Activated B cell treated with CpG ODN at 0.5 μM for 24 hours (primary cell): ENCODE measurements at regions of chr2 and their contacts with region 1.

Region 1: GRCh38 chr2:119759451-119760236 is at the start of gene PTPN4:
- DNase-seq: peak; percentile 87
- ATAC-seq: peak; percentile 93
- H3K4me3 Mint-ChIP-seq: peak within 1 kb of the TSS; percentile 95
- H3K27ac Mint-ChIP-seq: peak within 1 kb of the TSS; percentile 89
- H3K4me1 Mint-ChIP-seq: peaks cover 41% of the 10 kb centered on the region
- H3K27me3 Mint-ChIP-seq: no peaks in the 10 kb centered on the region
- CTCF ChIP-seq: no peak
- total RNA-seq, gene PTPN4: 28.8 and 41.2 TPM in 2 replicates

Region 2: GRCh38 chr2:118088051-118089024 is 1671.3 kb before region 1 on chr2 and contains the start of gene INSIG2:
- CTCF ChIA-PET with region 1: no interaction called
- POLR2A ChIA-PET with region 1: interaction called, 7 read pairs
- intact Hi-C with region 1: loop called (anchors 2 kb)
- DNase-seq: peak; percentile 88
- ATAC-seq: peak; percentile 84
- H3K4me3 Mint-ChIP-seq: peak within 1 kb of the TSS; percentile 94
- H3K27ac Mint-ChIP-seq: peak within 1 kb of the TSS; percentile 84
- H3K4me1 Mint-ChIP-seq: peaks cover 32% of the 10 kb centered on the region
- H3K27me3 Mint-ChIP-seq: no peaks in the 10 kb centered on the region
- CTCF ChIP-seq: no peak
- total RNA-seq, gene INSIG2: 16.8 and 16.9 TPM in 2 replicates

Region 3: DNA sequence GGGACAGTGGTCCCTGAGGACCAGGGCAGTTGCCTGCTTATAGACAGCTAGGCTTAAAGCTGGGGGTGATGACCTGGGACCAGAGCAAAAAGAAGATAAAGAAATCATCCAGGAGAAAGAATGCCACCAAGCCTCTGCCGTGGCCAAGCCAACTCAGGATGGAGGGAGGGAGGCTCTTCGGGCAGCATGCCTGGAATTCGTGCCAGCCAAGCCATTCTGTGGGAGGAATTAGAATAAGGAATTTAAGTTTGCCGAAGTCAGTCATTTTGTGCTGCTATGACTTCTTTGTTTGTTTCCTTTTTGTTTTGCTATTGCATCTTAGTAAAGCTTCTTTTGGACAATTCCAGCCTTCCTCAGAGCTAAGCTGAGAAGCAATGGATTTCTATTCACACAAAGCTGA is 1036.2 kb before region 1 on chr2:
- CTCF ChIA-PET with region 1: no interaction called
- POLR2A ChIA-PET with region 1: no interaction called
- intact Hi-C with region 1: no loop called
- DNase-seq: no peak
- ATAC-seq: no peak
- H3K4me3 Mint-ChIP-seq: no peak overlapping the region
- H3K27ac Mint-ChIP-seq: no peak overlapping the region
- H3K4me1 Mint-ChIP-seq: no peaks in the 10 kb centered on the region
- H3K27me3 Mint-ChIP-seq: no peaks in the 10 kb centered on the region
- CTCF ChIP-seq: no peak

Region 4: DNA sequence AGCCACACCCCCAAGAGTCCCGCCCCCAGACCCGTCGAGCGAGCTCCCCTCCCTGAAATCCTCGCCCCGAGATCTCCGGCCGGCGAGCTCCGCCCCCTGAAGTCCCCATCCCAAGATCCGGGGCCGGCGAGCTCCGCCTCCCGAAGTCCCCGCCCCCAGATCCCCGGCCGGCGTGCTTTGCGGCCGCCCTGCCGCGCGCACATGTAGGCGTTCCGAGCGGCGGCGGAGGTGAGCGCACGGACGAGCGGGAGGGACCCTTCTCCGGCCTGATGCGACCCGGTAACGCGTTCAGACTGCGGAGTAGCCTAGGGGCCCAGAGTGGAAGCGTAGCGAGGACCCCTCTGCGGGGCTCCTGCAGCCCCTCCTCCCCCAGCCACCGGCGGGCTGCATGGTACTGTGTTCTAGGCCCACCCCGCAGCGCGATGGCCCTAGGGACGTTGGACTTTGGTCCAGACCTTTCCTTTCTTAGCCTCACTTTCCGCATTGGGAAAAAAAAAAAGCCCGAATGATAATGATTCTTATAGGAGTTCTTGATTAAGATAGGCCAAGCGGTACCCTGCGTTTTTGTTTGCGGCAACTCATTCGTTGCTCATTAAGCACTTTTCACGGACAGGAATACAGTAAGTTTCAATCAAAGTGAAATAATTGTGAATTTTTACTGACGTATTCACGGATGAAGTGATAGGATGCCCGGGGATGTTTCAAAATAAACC is 80.5 kb before region 1 on chr2 and contains the start of gene TMEM177:
- CTCF ChIA-PET with region 1: no interaction called
- POLR2A ChIA-PET with region 1: interaction called, 17 read pairs
- intact Hi-C with region 1: loop called (anchors 1 kb)
- DNase-seq: peak; percentile 90
- ATAC-seq: peak; percentile 96
- H3K4me3 Mint-ChIP-seq: peak within 1 kb of the TSS; percentile 90
- H3K27ac Mint-ChIP-seq: peak within 1 kb of the TSS; percentile 68
- H3K4me1 Mint-ChIP-seq: peaks cover 23% of the 10 kb centered on the region
- H3K27me3 Mint-ChIP-seq: no peaks in the 10 kb centered on the region
- CTCF ChIP-seq: no peak
- total RNA-seq, gene TMEM177: 9.0 and 10.3 TPM in 2 replicates

Region 5: DNA sequence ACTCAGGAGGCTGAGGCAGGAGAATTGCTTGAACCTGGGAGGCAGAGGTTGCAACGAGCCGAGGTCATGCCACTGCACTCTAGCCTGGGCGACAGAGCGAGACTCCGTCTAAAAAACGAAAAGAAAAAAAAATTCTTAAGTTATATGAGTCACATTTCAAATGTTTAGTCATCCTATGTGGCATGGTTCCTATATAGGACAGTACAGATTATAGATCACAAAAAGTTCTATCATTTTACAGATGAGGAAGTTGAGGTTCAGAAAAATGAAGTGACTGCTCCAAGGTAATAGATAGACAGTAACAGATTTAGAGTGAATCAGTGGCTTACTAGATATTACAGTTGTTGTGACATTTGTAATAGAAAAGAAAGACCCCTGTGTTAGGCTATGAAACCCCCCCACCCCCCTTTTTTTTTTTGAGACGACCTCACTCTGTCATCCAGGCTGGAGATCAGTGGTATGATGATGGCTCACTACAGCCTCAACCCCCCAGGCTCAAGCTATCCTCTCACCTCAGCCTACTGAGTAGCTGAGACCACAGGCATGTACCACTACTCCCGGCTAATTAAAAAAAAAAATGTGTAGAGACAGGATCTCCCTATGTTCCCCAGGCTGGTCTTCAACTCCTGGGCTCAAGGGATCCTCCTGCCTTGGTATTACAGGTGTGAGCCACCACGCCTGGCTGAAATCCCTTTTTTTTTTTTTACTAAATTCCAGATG is 22.8 kb after region 1 on chr2:
- CTCF ChIA-PET with region 1: no interaction called
- POLR2A ChIA-PET with region 1: no interaction called
- intact Hi-C with region 1: loop called (anchors 1 kb)
- DNase-seq: no peak
- ATAC-seq: peak; percentile 64
- H3K4me3 Mint-ChIP-seq: no peak overlapping the region
- H3K27ac Mint-ChIP-seq: no peak overlapping the region
- H3K4me1 Mint-ChIP-seq: peaks cover 19% of the 10 kb centered on the region
- H3K27me3 Mint-ChIP-seq: no peaks in the 10 kb centered on the region
- CTCF ChIP-seq: no peak

Region 6: GRCh38 chr2:119856469-119856912 is 96.8 kb after region 1 on chr2:
- CTCF ChIA-PET with region 1: no interaction called
- POLR2A ChIA-PET with region 1: no interaction called
- intact Hi-C with region 1: no loop called
- DNase-seq: no peak
- ATAC-seq: no peak
- H3K4me3 Mint-ChIP-seq: no peak overlapping the region
- H3K27ac Mint-ChIP-seq: no peak overlapping the region
- H3K4me1 Mint-ChIP-seq: peaks cover 25% of the 10 kb centered on the region
- H3K27me3 Mint-ChIP-seq: no peaks in the 10 kb centered on the region
- CTCF ChIP-seq: no peak

Region 7: DNA sequence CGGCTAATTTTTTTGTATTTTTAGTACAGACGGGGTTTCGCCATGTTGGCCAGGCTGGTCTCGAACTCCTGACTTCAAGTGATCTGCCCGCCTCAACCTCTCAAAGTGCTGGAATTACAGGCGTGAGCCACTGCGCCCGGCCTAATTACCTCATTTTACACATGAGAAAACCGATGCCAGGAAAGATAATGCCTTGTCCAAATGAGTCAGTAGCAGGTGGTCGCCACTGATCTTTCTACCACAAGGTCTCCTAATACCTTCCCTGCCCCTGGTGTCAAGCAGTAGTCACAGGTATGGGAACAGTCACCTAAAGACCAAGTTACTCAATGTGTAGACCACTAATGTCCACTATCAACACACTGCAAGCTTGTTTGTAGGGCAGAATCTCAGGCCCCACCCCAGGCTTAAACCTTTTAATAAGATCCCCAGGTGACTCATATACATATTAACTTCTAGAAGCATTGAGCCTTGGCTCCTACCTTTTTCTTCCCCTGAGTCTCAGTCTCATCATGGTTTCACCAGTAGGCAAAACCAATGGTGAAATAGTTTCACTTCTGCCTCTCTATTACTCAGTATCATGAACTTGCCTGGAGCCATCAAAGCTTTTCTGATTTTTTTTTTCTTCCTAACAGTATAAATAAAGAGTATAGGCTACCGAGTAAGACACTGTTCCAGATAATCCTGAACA is 246.3 kb after region 1 on chr2:
- CTCF ChIA-PET with region 1: no interaction called
- POLR2A ChIA-PET with region 1: no interaction called
- intact Hi-C with region 1: loop called (anchors 1 kb)
- DNase-seq: no peak
- ATAC-seq: peak; percentile 96
- H3K4me3 Mint-ChIP-seq: no peak overlapping the region
- H3K27ac Mint-ChIP-seq: peak overlapping the region; percentile 83
- H3K4me1 Mint-ChIP-seq: peaks cover 20% of the 10 kb centered on the region
- H3K27me3 Mint-ChIP-seq: no peaks in the 10 kb centered on the region
- CTCF ChIP-seq: no peak

Region 8: DNA sequence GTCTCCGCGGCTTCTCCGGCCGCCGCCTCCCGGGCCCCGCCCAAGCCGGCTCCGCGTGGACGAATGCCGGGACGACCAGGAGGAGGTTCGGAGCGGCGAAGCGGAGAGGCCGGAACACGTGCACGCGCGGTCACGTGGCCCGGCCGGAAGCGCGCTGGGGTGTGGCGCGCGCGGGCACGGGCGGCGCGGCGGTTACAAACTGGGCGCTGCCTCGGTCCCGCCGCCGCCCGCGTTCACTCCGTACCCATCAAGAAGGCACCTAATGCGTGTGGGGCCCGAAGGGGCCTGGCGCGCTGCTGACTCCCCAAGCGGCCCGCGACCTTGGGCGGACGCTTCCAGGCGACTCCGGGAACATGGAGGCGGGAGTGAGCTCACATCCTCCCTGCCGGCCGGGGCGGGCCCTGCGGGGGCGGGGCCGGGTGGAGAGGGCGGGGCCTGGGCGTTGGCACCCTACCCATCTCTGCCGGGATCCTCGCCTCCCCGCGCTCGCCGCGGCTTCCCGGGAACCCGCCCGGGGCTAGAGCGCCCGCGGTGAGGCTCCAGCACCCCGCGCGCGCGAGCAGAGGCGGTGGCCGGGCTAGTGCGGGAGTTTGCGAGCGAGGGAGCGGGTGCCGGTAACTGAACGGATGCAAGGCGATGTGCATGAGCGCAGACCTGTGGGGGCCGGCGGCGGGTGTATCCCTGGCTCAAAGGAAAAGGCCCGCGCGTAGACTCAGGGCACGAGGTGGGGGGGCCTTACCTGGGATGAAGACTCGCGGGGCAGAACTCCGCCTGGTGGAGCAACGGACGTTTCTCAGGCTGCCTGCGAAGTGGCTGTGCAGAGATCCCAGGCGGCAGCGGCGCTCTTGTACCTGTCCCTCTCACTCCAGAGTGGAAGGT is 463.6 kb after region 1 on chr2 and contains the start of gene TMEM185B:
- CTCF ChIA-PET with region 1: no interaction called
- POLR2A ChIA-PET with region 1: interaction called, 5 read pairs
- intact Hi-C with region 1: loop called (anchors 1 kb)
- DNase-seq: peak; percentile 97
- ATAC-seq: peak; percentile 96
- H3K4me3 Mint-ChIP-seq: peak within 1 kb of the TSS; percentile 87
- H3K27ac Mint-ChIP-seq: peak within 1 kb of the TSS; percentile 90
- H3K4me1 Mint-ChIP-seq: peaks cover 56% of the 10 kb centered on the region
- H3K27me3 Mint-ChIP-seq: no peaks in the 10 kb centered on the region
- CTCF ChIP-seq: no peak
- total RNA-seq, gene TMEM185B: 25.6 and 26.8 TPM in 2 replicates

Region 9: GRCh38 chr2:120476141-120476540 is 716.5 kb after region 1 on chr2:
- CTCF ChIA-PET with region 1: no interaction called
- POLR2A ChIA-PET with region 1: no interaction called
- intact Hi-C with region 1: no loop called
- DNase-seq: no peak
- ATAC-seq: no peak
- H3K4me3 Mint-ChIP-seq: no peak overlapping the region
- H3K27ac Mint-ChIP-seq: no peak overlapping the region
- H3K4me1 Mint-ChIP-seq: no peaks in the 10 kb centered on the region
- H3K27me3 Mint-ChIP-seq: no peaks in the 10 kb centered on the region
- CTCF ChIP-seq: no peak

Region 10: GRCh38 chr2:120712180-120712681 is 952.6 kb after region 1 on chr2:
- CTCF ChIA-PET with region 1: no interaction called
- POLR2A ChIA-PET with region 1: no interaction called
- intact Hi-C with region 1: no loop called
- DNase-seq: no peak
- ATAC-seq: no peak
- H3K4me3 Mint-ChIP-seq: no peak overlapping the region
- H3K27ac Mint-ChIP-seq: no peak overlapping the region
- H3K4me1 Mint-ChIP-seq: no peaks in the 10 kb centered on the region
- H3K27me3 Mint-ChIP-seq: peaks cover 11% of the 10 kb centered on the region
- CTCF ChIP-seq: no peak